ENCODE measurements at regions of chr7 and their contacts with region 1.

Region 1: GRCh38 chr7:104397442-104397841 is 69.0 kb downstream of the LHFPL3 start:
- DNase-seq: no peak
- H3K4me3 ChIP-seq: no peak overlapping the region
- H3K27ac ChIP-seq: no peak overlapping the region
- H3K4me1 ChIP-seq: no peaks in the 10 kb centered on the region
- H3K27me3 ChIP-seq: no peaks in the 10 kb centered on the region
- CTCF ChIP-seq: no peak

Region 2: DNA sequence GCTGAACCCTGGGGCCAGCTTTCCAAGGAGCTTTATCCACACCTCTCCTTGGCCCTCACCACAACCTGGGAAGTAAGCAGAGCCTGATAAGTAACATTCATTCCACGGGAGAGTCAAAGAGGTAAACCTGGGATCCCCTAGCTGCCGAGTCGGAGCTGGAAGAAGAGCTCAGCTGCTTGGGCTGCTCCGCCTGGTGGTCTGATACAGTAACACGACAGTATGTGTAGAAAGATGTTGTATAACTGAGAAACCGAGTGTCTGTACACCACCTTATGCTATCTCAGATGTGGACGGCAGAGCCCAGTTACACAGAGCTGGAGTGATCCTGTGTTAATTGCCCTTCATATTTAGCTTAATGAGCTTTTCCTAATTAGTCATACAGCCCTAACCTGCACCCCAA is 465.3 kb after region 1 on chr7:
- CTCF ChIA-PET with region 1: interaction called, 10 read pairs
- dilution Hi-C with region 1: no loop called
- in situ Hi-C with region 1: no loop called
- intact Hi-C with region 1: no loop called
- DNase-seq: no peak
- H3K4me3 ChIP-seq: no peak overlapping the region
- H3K27ac ChIP-seq: no peak overlapping the region
- H3K4me1 ChIP-seq: no peaks in the 10 kb centered on the region
- H3K27me3 ChIP-seq: no peaks in the 10 kb centered on the region
- CTCF ChIP-seq: peak; percentile 29 to 32